CD8-positive, alpha-beta memory T cell (primary cell): ENCODE measurements at regions of chr11 and their contacts with region 1.

Region 1: DNA sequence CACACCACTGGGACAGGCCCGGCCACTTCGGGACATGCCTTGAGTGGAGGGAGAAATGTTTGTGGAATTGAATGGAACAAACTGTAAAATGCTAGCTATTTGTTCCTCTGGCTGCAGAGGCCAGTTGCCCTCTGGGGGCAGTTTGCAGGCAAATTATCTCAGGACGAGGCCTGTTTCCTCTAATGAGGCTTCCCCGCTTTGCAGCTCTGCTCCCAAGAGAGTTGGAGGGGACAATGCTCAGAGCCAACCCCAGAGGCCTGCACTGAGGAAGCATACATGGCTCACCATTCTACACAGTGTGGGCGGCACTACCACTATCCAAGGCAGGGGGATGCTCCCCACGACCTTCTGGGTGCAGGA is 11.4 kb downstream of the ARRB1 start:
- DNase-seq: no peak
- H3K4me3 ChIP-seq: peak overlapping the region; percentile 48
- H3K4me3 Mint-ChIP-seq: peak overlapping the region in 5 of 7 donors; percentile 41 to 82 (median 76)
- H3K27ac ChIP-seq: peak overlapping the region; percentile 25
- H3K27ac Mint-ChIP-seq: peak overlapping the region; percentile 30 to 96 (median 90)
- H3K4me1 ChIP-seq: peaks cover 84% of the 10 kb centered on the region
- H3K4me1 Mint-ChIP-seq: peaks cover 67 to 87% (median 72%) of the 10 kb centered on the region in 3 donors
- H3K27me3 ChIP-seq: no peaks in the 10 kb centered on the region
- H3K27me3 Mint-ChIP-seq: no peaks in the 10 kb centered on the region

Region 2: DNA sequence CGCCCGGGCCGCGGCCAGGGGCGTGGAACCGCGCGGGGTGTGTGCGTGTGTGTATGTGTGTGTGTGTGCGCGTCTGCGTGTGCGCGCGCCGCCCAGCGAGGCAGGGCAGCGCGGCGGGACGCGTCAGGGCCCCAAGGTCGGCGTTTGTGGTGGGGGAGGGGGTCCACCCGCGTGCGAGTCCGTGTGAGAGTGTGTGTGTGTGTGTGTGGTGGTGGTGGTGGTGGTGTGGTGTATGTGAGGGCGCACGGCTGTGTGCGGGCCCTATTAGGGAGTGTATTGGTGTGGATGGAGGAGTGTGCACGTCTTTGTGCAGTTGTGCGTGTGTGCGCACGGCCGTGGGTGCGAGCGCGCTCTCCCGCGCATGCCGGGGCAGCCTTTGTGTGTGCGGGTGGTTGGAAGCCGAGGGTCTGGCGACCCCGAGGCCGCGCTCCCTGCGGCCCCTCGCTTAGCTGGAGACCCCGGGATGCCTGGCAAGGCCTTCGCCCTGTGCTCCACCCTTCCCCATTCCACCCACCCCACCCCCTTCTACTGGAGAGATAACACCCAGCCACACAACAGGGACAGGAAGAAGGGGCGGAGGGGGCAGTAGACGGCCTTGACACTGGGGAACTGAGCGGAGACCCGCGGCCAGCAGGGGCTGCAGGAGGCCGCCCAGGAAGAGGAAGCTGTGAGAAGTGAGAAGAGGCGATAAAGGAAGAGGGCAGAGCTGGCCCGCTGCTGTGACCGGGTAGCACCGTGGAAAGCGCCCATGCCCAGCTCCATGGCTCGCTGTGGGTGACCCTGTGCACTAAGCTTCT is 12.0 kb after region 1 on chr11:
- CTCF ChIA-PET with region 1: interaction called, 5 read pairs
- POLR2A ChIA-PET with region 1: interaction called, 28 read pairs
- DNase-seq: peak; percentile 20 to 79 (median 68)
- H3K4me3 ChIP-seq: peak overlapping the region; percentile 72
- H3K4me3 Mint-ChIP-seq: peak overlapping the region; percentile 89 to 96 (median 92)
- H3K27ac ChIP-seq: peak overlapping the region; percentile 76
- H3K27ac Mint-ChIP-seq: peak overlapping the region; percentile 78 to 97 (median 88)
- H3K4me1 ChIP-seq: peaks cover 50% of the 10 kb centered on the region
- H3K4me1 Mint-ChIP-seq: peaks cover 46 to 62% (median 58%) of the 10 kb centered on the region in 3 donors
- H3K27me3 ChIP-seq: no peaks in the 10 kb centered on the region
- H3K27me3 Mint-ChIP-seq: peaks cover 2 to 8% of the 10 kb centered on the region in 2 donors